Heart right ventricle (tissue), 16 donors: ENCODE measurements at regions of chr12 and their contacts with region 1.

Region 1: DNA sequence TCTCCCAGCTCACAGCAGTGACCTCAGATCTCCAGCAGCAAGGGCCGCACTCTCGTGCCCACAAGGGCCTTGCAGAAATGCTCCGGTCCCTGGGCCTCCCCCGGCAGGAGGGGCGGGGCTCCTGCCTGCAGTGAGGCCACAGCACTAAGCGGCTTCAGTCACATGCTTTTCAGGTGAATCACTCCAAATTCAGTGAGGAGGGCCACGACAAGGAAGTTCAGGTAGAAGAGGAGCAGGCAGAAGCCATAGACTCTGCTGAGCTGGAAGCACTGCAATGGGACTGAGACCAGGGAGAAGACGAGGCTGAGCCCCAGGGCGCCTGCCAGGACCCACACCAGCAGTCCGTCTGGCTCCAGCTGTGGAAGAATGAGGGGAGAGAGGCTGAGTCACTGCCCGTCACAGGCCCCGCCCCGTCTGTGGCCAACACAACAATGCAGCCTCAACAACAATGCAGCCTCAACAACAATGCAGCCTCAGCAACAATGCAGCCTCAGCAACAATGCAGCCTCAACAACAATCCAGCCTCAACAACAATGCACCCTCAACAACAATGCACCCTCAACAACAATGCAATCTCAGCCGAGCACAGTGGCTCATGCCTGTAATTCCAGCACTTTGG is 35.2 kb downstream of the SLC8B1 start:
- DNase-seq: peak; percentile 41 to 70
- ATAC-seq: peak; percentile 25 to 76 (median 56)
- H3K4me3 ChIP-seq: no peak overlapping the region
- H3K27ac ChIP-seq: peak overlapping the region; percentile 72 to 90 (median 82)
- H3K4me1 ChIP-seq: peaks cover 5 to 51% (median 33%) of the 10 kb centered on the region in 9 donors
- H3K27me3 ChIP-seq: no peaks in the 10 kb centered on the region
- CTCF ChIP-seq: no peak

Region 2: GRCh38 chr12:112656140-112656539 is 643.6 kb before region 1 on chr12:
- intact Hi-C with region 1: no loop called
- DNase-seq: no peak
- ATAC-seq: no peak
- H3K4me3 ChIP-seq: no peak overlapping the region
- H3K27ac ChIP-seq: no peak overlapping the region
- H3K4me1 ChIP-seq: no peaks in the 10 kb centered on the region
- H3K27me3 ChIP-seq: peaks cover 0 to 23% (median 6%) of the 10 kb centered on the region in 7 donors
- CTCF ChIP-seq: no peak

Region 3: DNA sequence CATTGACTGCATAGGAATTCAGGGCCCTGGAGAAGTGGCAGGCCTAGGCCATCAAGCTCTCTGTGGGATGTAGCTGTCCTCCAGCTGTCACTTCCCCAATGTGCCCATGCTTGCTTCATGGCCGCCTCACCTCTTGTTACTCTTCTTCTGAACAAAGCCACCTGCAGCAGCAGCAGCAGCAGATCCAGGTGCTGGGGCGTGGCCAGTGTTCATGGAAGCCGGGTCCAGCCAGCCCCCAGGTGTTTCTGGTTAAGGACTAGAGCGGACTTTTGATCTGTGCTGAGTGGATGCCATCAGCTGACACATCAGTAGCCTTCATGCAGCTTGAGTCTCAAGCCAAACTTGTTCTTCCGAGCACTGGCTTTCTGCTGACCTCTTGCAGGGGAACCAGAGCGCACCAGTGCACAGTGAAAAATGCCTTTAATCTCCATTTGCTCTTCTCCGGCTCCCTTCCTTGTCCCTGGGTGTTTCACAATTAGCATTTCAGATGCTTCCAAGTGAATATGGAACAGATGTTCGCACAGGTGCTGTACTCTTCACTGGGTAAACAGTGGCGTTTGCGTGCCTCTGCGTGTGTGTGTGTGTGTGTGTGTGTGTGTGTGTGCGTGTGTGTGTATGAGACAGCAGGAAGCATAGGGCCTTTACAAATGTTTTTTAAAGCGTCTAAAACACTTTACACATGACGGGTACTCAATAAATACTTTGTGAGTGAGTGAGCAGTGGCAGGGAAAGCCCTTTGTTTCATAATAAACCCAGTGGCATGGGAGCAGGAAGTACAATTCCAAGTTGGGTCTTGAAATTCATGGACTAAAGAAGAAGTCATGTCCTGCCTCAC is 58.3 kb before region 1 on chr12:
- intact Hi-C with region 1: no loop called
- DNase-seq: no peak
- ATAC-seq: peak in 1 of 8 donors; percentile 7
- H3K4me3 ChIP-seq: no peak overlapping the region
- H3K27ac ChIP-seq: peak overlapping the region in 9 of 10 donors; percentile 56 to 98 (median 71)
- H3K4me1 ChIP-seq: peaks cover 34 to 99% (median 88%) of the 10 kb centered on the region in 9 donors
- H3K27me3 ChIP-seq: no peaks in the 10 kb centered on the region
- CTCF ChIP-seq: no peak

Region 4: GRCh38 chr12:113378291-113378690 is 78.6 kb after region 1 on chr12:
- intact Hi-C with region 1: loop called in 1 of 10 experiments (anchors 5 kb)
- DNase-seq: no peak
- ATAC-seq: no peak
- H3K4me3 ChIP-seq: no peak overlapping the region
- H3K27ac ChIP-seq: no peak overlapping the region
- H3K4me1 ChIP-seq: no peaks in the 10 kb centered on the region
- H3K27me3 ChIP-seq: no peaks in the 10 kb centered on the region
- CTCF ChIP-seq: no peak

Region 5: GRCh38 chr12:113647048-113647447 is 347.3 kb after region 1 on chr12:
- intact Hi-C with region 1: no loop called
- DNase-seq: no peak
- ATAC-seq: no peak
- H3K4me3 ChIP-seq: no peak overlapping the region
- H3K27ac ChIP-seq: no peak overlapping the region
- H3K4me1 ChIP-seq: no peaks in the 10 kb centered on the region
- H3K27me3 ChIP-seq: peaks cover 0 to 95% (median 82%) of the 10 kb centered on the region in 7 donors
- CTCF ChIP-seq: peak in 1 of 9 donors; percentile 12